CD8-positive, alpha-beta T cell (primary cell): ENCODE measurements at regions of chr10 and their contacts with region 1.

Region 1: DNA sequence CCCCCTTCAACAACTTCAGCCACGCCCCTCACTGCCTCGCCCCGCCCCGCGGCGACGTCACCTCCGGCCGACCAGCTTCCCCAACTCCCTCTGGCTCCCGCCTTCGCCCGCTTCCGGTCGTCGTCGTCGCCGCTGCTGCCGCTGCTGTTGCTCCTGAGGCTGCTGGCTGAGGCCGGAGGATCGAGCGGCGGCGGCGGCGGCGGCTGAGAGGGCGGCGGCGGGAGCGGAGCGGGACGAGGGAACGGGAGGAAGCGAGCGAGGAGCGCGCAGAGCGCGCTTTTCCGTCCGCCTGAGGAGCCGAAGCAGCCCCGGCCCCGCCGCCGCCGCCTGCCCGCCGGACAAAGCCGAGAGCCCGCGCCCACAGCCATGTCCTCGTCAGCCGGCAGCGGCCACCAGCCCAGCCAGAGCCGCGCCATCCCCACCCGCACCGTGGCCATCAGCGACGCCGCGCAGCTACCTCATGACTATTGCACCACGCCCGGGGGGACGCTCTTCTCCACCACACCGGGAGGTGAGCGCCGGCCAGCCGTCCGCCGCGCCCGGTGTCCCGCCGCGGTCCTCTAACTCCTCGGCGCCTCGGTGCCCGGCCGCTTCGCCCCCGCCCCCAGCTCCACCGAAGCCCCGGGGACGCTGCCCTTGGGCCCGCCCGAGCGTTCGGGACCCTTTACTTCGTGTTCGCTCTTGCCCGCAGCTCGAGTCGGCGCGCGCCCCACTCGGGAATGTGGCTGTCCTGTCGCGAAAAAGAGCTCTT is at the start of gene EIF4EBP2:
- DNase-seq: peak; percentile 95 to 100 (median 98)
- ATAC-seq: peak; percentile 97
- H3K4me3 ChIP-seq: peak within 1 kb of the TSS; percentile 63 to 77
- H3K4me3 Mint-ChIP-seq: peak within 1 kb of the TSS; percentile 97
- H3K27ac ChIP-seq: peak within 1 kb of the TSS; percentile 73 to 76
- H3K27ac Mint-ChIP-seq: peak within 1 kb of the TSS; percentile 93
- H3K4me1 ChIP-seq: peaks cover 23% of the 10 kb centered on the region
- H3K4me1 Mint-ChIP-seq: peaks cover 46% of the 10 kb centered on the region
- H3K27me3 ChIP-seq: no peaks in the 10 kb centered on the region
- H3K27me3 Mint-ChIP-seq: no peaks in the 10 kb centered on the region
- CTCF ChIP-seq: no peak
- total RNA-seq, gene EIF4EBP2: 22.4 TPM

Region 2: GRCh38 chr10:70169649-70170364 is 234.4 kb before region 1 on chr10:
- CTCF ChIA-PET with region 1: no interaction called
- POLR2A ChIA-PET with region 1: interaction called, 7 read pairs
- intact Hi-C with region 1: loop called (anchors 1 to 5 kb)
- DNase-seq: peak in 3 of 9 experiments; percentile 28 to 51 (median 29)
- ATAC-seq: peak; percentile 13
- H3K4me3 ChIP-seq: peak overlapping the region; percentile 65 to 90
- H3K4me3 Mint-ChIP-seq: peak overlapping the region; percentile 94
- H3K27ac ChIP-seq: peak overlapping the region; percentile 83 to 94
- H3K27ac Mint-ChIP-seq: peak overlapping the region; percentile 97
- H3K4me1 ChIP-seq: peaks cover 57% of the 10 kb centered on the region
- H3K4me1 Mint-ChIP-seq: peaks cover 60% of the 10 kb centered on the region
- H3K27me3 ChIP-seq: no peaks in the 10 kb centered on the region
- H3K27me3 Mint-ChIP-seq: no peaks in the 10 kb centered on the region
- CTCF ChIP-seq: no peak

Region 3: GRCh38 chr10:70381471-70382421 is 22.5 kb before region 1 on chr10:
- CTCF ChIA-PET with region 1: interaction called, 7 read pairs
- POLR2A ChIA-PET with region 1: interaction called, 11 read pairs
- intact Hi-C with region 1: loop called (anchors 1 kb)
- DNase-seq: peak in 4 of 9 experiments; percentile 20 to 57 (median 30)
- ATAC-seq: peak; percentile 37
- H3K4me3 ChIP-seq: peak overlapping the region; percentile 79 to 86
- H3K4me3 Mint-ChIP-seq: peak overlapping the region; percentile 87
- H3K27ac ChIP-seq: no peak overlapping the region
- H3K27ac Mint-ChIP-seq: no peak overlapping the region
- H3K4me1 ChIP-seq: peaks cover 8% of the 10 kb centered on the region
- H3K4me1 Mint-ChIP-seq: peaks cover 10% of the 10 kb centered on the region
- H3K27me3 ChIP-seq: no peaks in the 10 kb centered on the region
- H3K27me3 Mint-ChIP-seq: peaks cover 2% of the 10 kb centered on the region
- CTCF ChIP-seq: no peak

Region 4: DNA sequence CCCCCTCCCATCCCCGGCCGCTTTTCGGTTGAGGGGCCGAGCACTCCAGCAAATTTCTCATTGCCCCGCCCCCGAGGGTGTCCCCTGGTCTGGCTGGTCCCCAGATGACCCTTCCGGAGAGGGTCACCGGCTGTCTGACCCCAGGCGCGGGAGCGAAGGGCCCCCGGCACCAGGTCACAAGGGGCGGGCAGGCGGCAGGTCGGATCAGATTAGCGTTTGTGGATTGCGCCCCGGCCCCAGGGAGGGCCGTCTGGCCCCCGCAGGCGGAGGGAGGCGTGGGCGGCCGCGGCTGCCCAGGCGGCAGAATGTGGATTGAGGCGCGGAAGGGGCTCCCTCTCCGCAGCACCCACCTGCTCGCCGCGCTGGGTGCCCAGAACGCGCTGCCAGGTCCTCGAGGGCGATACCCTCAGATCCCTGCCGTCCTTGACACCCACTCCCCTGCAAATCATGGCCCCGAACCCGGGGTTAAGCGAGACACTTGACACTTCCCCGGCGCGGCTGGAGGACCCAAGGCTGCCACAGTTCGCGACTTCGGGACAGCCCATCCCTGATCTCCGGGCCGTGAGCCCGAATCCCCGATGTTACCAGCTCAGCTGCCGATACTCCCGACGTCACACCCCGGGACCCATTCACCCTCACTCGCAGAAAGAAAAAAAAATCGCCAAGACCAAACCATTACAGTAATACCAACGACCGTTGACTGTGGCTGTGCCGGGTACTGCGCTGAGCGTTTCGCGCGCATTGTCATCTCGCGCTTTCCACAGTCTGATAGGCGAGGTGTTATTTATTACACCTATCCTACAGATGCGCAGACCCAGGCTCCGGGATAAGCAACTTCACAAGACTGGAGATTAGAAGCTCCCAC is 36.3 kb after region 1 on chr10:
- CTCF ChIA-PET with region 1: no interaction called
- POLR2A ChIA-PET with region 1: no interaction called
- intact Hi-C with region 1: no loop called
- DNase-seq: no peak
- ATAC-seq: peak; percentile 46
- H3K4me3 ChIP-seq: peak overlapping the region in 1 of 2 experiments; percentile 33
- H3K4me3 Mint-ChIP-seq: peak overlapping the region; percentile 76
- H3K27ac ChIP-seq: no peak overlapping the region
- H3K27ac Mint-ChIP-seq: no peak overlapping the region
- H3K4me1 ChIP-seq: peaks cover 18% of the 10 kb centered on the region
- H3K4me1 Mint-ChIP-seq: peaks cover 15% of the 10 kb centered on the region
- H3K27me3 ChIP-seq: peaks cover 13 to 19% of the 10 kb centered on the region in 2 experiments
- H3K27me3 Mint-ChIP-seq: peaks cover 38% of the 10 kb centered on the region
- CTCF ChIP-seq: no peak

Region 5: DNA sequence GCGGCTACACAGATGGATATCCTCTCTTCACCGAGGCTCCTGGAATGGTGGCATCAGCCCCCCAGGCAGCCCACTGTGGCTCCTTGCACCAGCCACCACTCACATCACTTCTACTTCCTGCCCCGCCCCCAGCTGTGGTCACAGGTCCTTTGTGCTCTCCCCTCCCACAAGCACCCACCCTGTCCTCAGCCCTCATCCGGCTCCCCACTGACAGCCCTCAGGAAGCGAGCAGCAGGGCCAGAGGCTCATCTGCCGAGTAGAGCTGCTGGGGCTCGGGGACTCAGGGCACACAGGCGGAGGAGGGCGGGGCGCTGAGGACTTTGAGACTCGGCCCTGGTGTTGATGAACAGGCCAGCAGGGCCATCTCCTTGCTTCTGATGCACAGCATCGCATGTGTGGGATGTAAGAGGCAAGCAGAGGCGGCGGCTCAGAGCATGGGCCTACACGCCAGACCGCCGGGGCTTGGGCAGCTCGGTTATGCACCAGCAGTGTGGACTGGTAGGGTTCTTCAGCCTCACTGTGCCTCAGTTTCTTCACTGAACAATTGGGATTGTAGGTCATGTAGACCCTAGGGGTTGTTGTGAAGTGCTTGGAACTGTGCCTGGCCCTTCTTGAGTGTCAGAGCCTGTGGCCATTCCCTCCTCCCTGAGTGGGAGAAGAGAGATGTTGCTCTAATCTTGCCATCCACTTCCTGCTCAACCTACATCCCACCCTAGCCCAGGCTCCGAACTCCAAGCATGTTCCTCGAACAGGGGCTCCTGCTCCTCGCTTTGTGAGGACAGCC is 198.6 kb after region 1 on chr10 and contains the start of gene PRF1:
- CTCF ChIA-PET with region 1: no interaction called
- POLR2A ChIA-PET with region 1: no interaction called
- intact Hi-C with region 1: loop called in 1 of 2 experiments (anchors 5 kb)
- DNase-seq: peak; percentile 66 to 94 (median 90)
- ATAC-seq: peak; percentile 90
- H3K4me3 ChIP-seq: peak within 1 kb of the TSS; percentile 71 to 86
- H3K4me3 Mint-ChIP-seq: peak within 1 kb of the TSS; percentile 100
- H3K27ac ChIP-seq: peak within 1 kb of the TSS; percentile 61 to 73
- H3K27ac Mint-ChIP-seq: peak within 1 kb of the TSS; percentile 99
- H3K4me1 ChIP-seq: peaks cover 57% of the 10 kb centered on the region
- H3K4me1 Mint-ChIP-seq: peaks cover 71% of the 10 kb centered on the region
- H3K27me3 ChIP-seq: no peaks in the 10 kb centered on the region
- H3K27me3 Mint-ChIP-seq: no peaks in the 10 kb centered on the region
- CTCF ChIP-seq: no peak
- total RNA-seq, gene PRF1: 56.4 to 57.3 TPM

Region 6: DNA sequence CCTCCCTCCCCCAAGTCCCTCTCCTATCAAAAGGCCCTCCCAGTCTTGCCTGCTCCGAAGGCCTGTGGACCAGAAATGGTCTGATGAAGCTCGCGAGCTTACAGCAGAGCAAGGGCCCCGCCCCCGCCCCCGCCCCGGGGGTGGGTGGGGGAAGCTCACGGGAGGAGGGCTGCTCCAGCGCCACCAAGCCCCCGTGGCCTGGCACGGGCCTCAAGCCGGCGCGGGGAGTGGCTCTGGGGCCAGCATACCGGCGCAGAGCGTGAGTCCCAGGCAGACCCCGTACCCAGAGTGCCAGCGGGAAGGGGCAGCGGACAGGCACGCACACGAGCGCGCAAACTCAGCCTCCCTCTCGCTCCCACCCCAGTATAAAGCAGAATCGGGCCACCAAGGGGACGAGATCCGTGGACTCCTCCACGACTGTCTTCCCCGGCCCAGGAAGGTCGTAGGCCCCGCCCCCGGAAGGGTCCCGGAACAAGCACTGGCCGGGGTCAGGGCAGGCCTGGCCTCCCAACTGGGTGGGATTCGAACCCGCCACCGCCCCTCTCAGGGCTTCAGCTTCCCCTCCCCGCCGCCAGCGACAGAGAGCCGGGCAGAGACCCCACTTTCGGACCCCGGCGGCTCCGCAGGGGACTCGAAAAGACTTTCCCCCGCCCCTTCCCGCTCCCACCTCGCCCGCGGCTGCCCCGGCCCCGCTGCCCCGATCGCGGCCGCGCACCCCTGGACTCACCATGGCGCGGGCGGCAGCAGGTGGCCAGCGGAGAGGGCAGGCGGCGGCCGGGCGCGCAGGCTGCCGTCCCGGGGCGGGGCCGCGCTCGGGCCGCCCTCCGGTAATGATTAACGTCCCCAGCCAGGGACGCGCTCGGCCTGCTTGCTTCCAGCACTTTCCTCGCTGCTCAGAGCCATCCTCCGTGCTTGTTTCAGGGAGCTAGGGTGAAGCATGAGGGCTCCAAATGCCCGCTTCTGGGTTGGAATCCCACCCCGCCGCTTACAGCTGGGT is 483.9 kb after region 1 on chr10 and contains the start of gene PCBD1:
- CTCF ChIA-PET with region 1: no interaction called
- POLR2A ChIA-PET with region 1: interaction called, 3 read pairs
- intact Hi-C with region 1: loop called in 1 of 2 experiments (anchors 1 kb)
- DNase-seq: peak; percentile 36 to 82 (median 75)
- ATAC-seq: peak; percentile 93
- H3K4me3 ChIP-seq: peak within 1 kb of the TSS; percentile 69 to 91
- H3K4me3 Mint-ChIP-seq: peak within 1 kb of the TSS; percentile 89
- H3K27ac ChIP-seq: peak within 1 kb of the TSS; percentile 65 to 92
- H3K27ac Mint-ChIP-seq: peak within 1 kb of the TSS; percentile 91
- H3K4me1 ChIP-seq: peaks cover 16% of the 10 kb centered on the region
- H3K4me1 Mint-ChIP-seq: peaks cover 14% of the 10 kb centered on the region
- H3K27me3 ChIP-seq: no peaks in the 10 kb centered on the region
- H3K27me3 Mint-ChIP-seq: no peaks in the 10 kb centered on the region
- CTCF ChIP-seq: no peak
- total RNA-seq, gene PCBD1: 4.3 to 4.5 TPM